ENCODE measurements at regions of chr17 and their contacts with region 1.

Region 1: GRCh38 chr17:5097101-5097834 is 14.4 kb downstream of the ZNF232 start:
- DNase-seq: peak; percentile 72 to 82
- ATAC-seq: peak; percentile 88 to 96 (median 94)
- H3K4me3 ChIP-seq: peak overlapping the region; percentile 35 to 71 (median 58)
- H3K27ac ChIP-seq: peak overlapping the region; percentile 10 to 85 (median 74)
- H3K4me1 ChIP-seq: peaks cover 0 to 18% (median 8%) of the 10 kb centered on the region in 9 donors
- H3K27me3 ChIP-seq: peaks cover 0 to 13% (median 0%) of the 10 kb centered on the region in 7 donors
- CTCF ChIP-seq: peak in 1 of 9 donors; percentile 9

Region 2: DNA sequence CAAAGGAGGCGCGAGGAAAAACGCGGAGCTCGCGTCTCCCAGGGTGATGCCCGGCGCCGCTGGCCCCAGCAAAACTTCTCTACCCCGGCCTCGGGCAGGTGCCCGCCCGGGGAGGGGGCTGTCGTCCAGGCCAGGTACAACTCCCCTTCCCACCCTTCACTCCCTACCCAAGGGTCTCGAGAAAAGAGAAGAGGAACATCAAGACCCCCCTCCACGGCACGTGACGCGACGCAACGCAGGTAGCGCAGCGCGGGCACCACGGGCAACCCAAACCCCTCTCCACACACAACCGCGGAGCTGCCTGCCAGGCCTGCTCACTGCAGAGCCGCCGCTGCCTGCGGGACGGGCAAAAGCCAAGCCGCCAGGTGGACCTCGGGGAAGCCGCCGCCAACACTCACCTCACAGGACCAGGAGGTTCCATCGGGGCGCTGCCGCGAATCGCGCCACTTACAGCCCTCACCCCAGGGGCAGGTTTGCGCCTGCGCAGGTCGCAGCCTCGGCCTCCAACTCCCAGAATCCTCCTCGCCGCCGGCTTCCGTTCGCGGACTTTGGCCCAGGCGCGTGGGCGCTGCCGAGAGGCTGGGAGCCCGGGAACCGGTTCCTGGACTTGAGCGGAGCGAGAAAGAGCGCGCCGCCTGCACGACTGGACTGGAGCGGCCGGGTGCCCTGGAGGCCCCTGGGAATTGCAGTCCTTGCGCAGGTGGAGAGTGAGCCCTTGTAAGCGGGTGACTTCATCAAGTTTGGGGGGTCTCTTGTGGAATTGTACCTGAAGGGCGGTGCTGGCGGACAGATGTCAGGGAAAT is 14.3 kb after region 1 on chr17 and contains the start of gene ZNF232:
- intact Hi-C with region 1: no loop called
- DNase-seq: peak; percentile 94 to 96
- ATAC-seq: peak; percentile 95 to 98 (median 96)
- H3K4me3 ChIP-seq: peak within 1 kb of the TSS; percentile 58 to 97 (median 82)
- H3K27ac ChIP-seq: peak within 1 kb of the TSS in 9 of 10 donors; percentile 47 to 85 (median 78)
- H3K4me1 ChIP-seq: peaks cover 0 to 25% (median 9%) of the 10 kb centered on the region in 9 donors
- H3K27me3 ChIP-seq: peaks cover 0 to 21% (median 16%) of the 10 kb centered on the region in 7 donors
- CTCF ChIP-seq: peak in 2 of 9 donors; percentile 9 to 10
- total RNA-seq, gene ZNF232: 2.1 to 5.8 (median 4.4) TPM

Region 3: DNA sequence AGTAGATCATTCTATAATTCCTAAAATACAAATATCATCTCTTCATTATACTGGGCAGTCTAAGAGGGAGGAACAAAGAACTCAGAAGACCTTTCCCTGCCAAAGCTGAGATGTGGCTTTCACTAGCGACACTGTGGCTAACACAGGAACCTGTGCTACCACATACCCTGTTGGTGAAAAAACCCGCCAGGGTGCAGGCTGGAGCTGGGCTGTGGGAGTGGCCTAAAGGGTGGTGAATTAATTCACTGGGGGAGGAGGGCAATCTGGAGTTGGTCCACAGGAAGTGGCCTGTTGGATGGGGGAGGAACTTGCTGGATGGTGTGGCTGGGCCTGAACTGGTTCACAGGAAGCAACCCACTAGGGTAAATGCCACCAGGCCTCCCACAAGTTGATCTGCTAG is 87.0 kb after region 1 on chr17:
- intact Hi-C with region 1: loop called in 2 of 10 experiments (anchors 5 to 10 kb)
- DNase-seq: no peak
- ATAC-seq: no peak
- H3K4me3 ChIP-seq: no peak overlapping the region
- H3K27ac ChIP-seq: no peak overlapping the region
- H3K4me1 ChIP-seq: no peaks in the 10 kb centered on the region
- H3K27me3 ChIP-seq: no peaks in the 10 kb centered on the region
- CTCF ChIP-seq: no peak